T-cell (primary cell): ENCODE measurements at regions of chr11 and their contacts with region 1.

Region 1: DNA sequence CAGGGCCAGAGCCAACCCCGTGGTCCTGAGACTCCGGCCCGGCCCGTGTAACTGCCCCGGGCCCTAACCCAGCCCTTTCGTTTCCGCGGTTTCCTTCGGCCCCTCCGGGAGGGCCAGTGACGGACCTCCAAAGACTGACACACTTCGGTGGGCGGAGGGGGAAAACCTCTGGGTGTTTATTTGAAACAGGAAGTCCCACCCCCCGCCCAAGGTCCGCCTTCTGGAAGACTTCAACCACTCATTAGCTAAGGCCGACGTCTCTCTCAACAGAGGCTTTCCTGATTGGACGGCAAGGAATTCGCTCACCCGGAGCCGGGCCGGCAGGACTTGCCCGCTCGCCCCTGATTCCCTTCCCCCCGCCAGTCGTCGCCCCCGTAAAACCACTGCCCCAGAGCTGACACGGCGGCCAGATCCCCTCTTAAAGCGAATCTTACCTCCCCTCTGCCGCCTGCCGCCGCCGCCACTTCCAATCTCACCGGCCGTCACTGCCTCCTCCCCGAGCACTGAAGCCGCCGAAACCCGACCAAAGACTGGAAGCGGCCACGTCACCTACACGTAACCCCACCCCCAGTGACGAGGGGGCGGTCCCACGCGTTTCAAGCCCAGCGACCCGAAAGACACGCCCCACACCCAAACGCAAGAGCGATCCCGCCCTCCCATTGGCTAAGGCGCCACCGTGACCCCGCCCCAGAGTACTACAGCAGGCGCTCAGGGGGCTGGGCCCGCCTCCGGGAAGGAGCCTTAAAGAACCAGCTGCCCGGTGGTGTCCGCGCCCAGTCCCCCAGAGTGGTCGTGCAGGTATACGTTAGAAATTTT is at the start of gene STX5:
- DNase-seq: peak; percentile 97 to 100 (median 100)
- ATAC-seq: peak; percentile 89 to 97 (median 94)
- H3K4me3 ChIP-seq: peak within 1 kb of the TSS; percentile 96 to 97
- H3K4me3 Mint-ChIP-seq: peak within 1 kb of the TSS; percentile 94 to 99 (median 97)
- H3K27ac ChIP-seq: peak within 1 kb of the TSS; percentile 95
- H3K27ac Mint-ChIP-seq: peak within 1 kb of the TSS; percentile 98 to 99
- H3K4me1 ChIP-seq: peaks cover 13 to 42% of the 10 kb centered on the region in 2 experiments
- H3K4me1 Mint-ChIP-seq: peaks cover 41 to 52% (median 48%) of the 10 kb centered on the region in 3 donors
- H3K27me3 ChIP-seq: no peaks in the 10 kb centered on the region
- H3K27me3 Mint-ChIP-seq: no peaks in the 10 kb centered on the region
- total RNA-seq, gene STX5: 49.3 to 132 (median 58.0) TPM

Region 2: GRCh38 chr11:62671575-62672389 is 159.9 kb before region 1 on chr11 and contains the starts of genes LBHD1 and UQCC3:
- CTCF ChIA-PET with region 1: no interaction called
- POLR2A ChIA-PET with region 1: interaction called in 1 of 2 experiments, 10 read pairs
- DNase-seq: peak; percentile 32 to 81 (median 60)
- ATAC-seq: peak; percentile 72 to 80 (median 78)
- H3K4me3 ChIP-seq: peak within 1 kb of the TSS; percentile 82 to 96
- H3K4me3 Mint-ChIP-seq: peak within 1 kb of the TSS; percentile 98 to 99 (median 99)
- H3K27ac ChIP-seq: peak within 1 kb of the TSS; percentile 65
- H3K27ac Mint-ChIP-seq: peak within 1 kb of the TSS; percentile 98 to 99
- H3K4me1 ChIP-seq: peaks cover 7 to 45% of the 10 kb centered on the region in 2 experiments
- H3K4me1 Mint-ChIP-seq: peaks cover 57 to 62% (median 59%) of the 10 kb centered on the region in 3 donors
- H3K27me3 ChIP-seq: no peaks in the 10 kb centered on the region
- H3K27me3 Mint-ChIP-seq: no peaks in the 10 kb centered on the region
- total RNA-seq, gene LBHD1: 15.5 to 24.7 (median 20.7) TPM
- total RNA-seq, gene UQCC3: 2.7 to 9.3 (median 8.1) TPM

Region 3: DNA sequence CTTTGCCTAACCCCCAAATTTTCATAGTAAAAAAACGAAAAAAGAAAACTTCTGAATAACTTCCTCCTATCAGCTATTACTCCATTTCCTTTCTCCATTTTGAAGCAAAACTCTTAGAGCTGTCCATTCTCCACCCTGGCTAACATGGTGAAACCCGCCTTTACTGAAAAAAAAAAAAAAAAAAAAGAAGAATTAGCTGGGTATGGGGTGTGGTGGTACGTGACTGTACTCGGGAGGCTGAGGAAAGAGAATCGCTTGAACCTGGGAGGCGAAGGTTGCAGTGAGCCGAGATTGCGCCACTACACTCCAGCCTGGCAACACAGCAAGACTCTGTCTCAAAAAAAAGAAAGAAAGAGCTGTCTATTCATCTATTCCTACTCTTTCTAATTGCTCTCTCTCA is 15.2 kb before region 1 on chr11:
- CTCF ChIA-PET with region 1: interaction called in 1 of 2 experiments, 4 read pairs
- POLR2A ChIA-PET with region 1: interaction called, 7 to 12 read pairs
- DNase-seq: no peak
- ATAC-seq: no peak
- H3K4me3 ChIP-seq: no peak overlapping the region
- H3K4me3 Mint-ChIP-seq: no peak overlapping the region
- H3K27ac ChIP-seq: no peak overlapping the region
- H3K27ac Mint-ChIP-seq: no peak overlapping the region
- H3K4me1 ChIP-seq: no peaks in the 10 kb centered on the region
- H3K4me1 Mint-ChIP-seq: no peaks in the 10 kb centered on the region
- H3K27me3 ChIP-seq: no peaks in the 10 kb centered on the region
- H3K27me3 Mint-ChIP-seq: no peaks in the 10 kb centered on the region